PC-3 (cell line): ENCODE measurements at regions of chr10 and their contacts with region 1.

Region 1: DNA sequence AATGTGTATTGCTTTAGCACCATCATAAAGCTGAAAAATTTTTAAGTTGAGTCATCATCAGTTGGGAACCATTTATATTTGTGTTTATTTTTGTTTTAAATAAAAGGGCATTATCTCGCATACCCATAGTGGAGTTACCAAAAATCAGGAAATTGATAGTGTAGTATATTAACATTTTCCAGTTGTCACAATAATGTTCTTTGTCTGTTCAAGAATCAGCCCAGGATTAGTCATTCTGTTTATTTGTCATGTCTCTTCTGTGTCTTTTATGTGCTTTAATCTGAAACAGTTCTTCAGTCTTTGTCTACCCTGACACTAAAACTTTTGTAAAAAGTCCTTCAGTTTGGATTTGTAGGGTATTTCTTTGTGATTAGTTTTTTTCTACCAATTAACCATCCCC is 827.8 kb upstream of the ZWINT start:
- DNase-seq: peak; percentile 26
- ATAC-seq: peak; percentile 90
- H3K4me3 ChIP-seq: no peak overlapping the region
- H3K27ac ChIP-seq: no peak overlapping the region
- H3K4me1 ChIP-seq: no peaks in the 10 kb centered on the region
- H3K27me3 ChIP-seq: no peaks in the 10 kb centered on the region
- CTCF ChIP-seq: no peak

Region 2: GRCh38 chr10:57168611-57169240 is 20.1 kb before region 1 on chr10:
- CTCF ChIA-PET with region 1: no interaction called
- POLR2A ChIA-PET with region 1: no interaction called
- intact Hi-C with region 1: loop called (anchors 2 kb)
- DNase-seq: peak; percentile 8
- ATAC-seq: peak; percentile 64
- H3K4me3 ChIP-seq: no peak overlapping the region
- H3K27ac ChIP-seq: no peak overlapping the region
- H3K4me1 ChIP-seq: no peaks in the 10 kb centered on the region
- H3K27me3 ChIP-seq: no peaks in the 10 kb centered on the region
- CTCF ChIP-seq: no peak